Activated CD8-positive, alpha-beta T cell treated with anti-CD3 and anti-CD28 coated beads for 36 hours (primary cell): ENCODE measurements at regions of chr12 and their contacts with region 1.

Region 1: DNA sequence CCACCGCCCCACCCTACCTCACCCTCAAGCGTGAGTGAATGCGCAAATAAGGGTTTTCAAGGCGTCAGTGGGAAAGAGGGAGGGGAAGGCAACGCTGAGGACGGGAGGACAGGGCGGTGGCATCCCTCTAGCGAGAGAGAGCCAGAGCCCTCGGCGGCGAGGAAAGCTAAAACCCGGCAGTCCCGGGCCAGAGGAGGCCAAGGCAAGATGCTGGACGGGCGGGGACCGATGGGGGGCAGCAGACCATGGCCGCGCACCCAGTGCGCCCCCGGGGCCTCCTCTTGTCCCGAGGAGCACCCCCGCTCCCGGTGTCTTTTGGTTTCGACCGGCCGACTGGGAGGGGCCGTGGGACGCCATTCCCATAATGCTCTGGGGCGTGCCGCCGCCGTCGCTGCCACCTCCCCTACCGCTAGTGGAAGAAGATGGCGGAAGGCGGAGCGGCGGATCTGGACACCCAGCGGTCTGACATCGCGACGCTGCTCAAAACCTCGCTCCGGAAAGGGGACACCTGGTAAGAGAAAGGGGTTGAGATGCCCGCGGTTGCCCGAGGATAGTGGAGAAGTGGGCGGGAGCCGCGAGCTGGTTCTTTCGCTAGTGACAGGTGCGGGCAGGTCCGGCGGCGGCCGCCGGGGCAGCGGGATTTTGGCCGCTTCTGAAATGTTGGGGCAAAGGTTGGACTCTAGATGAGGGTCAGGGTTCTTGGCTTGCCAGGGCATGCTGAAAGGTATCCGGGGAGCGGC is at the start of gene USP15:
- DNase-seq: peak; percentile 97
- ATAC-seq: peak; percentile 76
- H3K4me3 Mint-ChIP-seq: peak within 1 kb of the TSS; percentile 83
- H3K27ac Mint-ChIP-seq: peak within 1 kb of the TSS; percentile 96
- H3K4me1 Mint-ChIP-seq: peaks cover 54% of the 10 kb centered on the region
- H3K27me3 Mint-ChIP-seq: no peaks in the 10 kb centered on the region
- CTCF ChIP-seq: peak; percentile 73
- total RNA-seq, gene USP15: 112 to 118 TPM

Region 2: DNA sequence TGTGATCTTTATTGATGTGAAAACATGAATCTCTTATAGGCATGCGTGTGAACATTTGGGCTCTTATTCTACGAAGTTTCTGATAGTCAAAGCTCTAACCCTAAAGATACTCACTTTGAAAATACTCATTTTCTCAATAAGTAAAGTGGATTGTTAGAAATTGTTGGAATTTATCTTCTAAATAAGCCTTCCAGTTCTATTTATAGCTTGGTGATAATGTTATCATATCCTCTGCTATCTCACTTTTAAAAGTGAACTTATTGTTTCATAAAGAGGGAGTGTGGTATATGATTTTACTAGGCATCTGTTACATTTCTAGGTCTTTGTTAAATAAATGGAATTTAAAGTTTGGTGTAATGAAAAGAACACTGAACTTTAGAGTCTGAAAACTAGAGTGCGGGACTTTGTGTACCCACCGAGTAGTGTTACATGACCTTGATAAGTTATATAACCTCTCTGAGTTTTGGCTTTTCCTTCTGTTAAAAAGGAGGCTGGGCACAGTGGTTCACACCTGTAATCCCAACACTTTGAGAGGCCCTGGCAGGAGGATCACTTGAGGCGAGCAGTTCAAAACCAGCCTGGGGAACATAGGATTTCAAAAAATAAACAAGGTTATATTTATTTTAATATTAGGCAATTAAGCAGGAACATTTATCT is 13.7 kb after region 1 on chr12:
- CTCF ChIA-PET with region 1: no interaction called
- POLR2A ChIA-PET with region 1: no interaction called
- intact Hi-C with region 1: loop called (anchors 2 kb)
- DNase-seq: no peak
- ATAC-seq: no peak
- H3K4me3 Mint-ChIP-seq: no peak overlapping the region
- H3K27ac Mint-ChIP-seq: peak overlapping the region; percentile 79
- H3K4me1 Mint-ChIP-seq: peaks cover 75% of the 10 kb centered on the region
- H3K27me3 Mint-ChIP-seq: no peaks in the 10 kb centered on the region
- CTCF ChIP-seq: no peak

Region 3: GRCh38 chr12:62379026-62379722 is 119.0 kb after region 1 on chr12:
- CTCF ChIA-PET with region 1: no interaction called
- POLR2A ChIA-PET with region 1: interaction called, 3 read pairs
- intact Hi-C with region 1: loop called (anchors 10 kb)
- DNase-seq: no peak
- ATAC-seq: no peak
- H3K4me3 Mint-ChIP-seq: no peak overlapping the region
- H3K27ac Mint-ChIP-seq: peak overlapping the region; percentile 42
- H3K4me1 Mint-ChIP-seq: peaks cover 23% of the 10 kb centered on the region
- H3K27me3 Mint-ChIP-seq: no peaks in the 10 kb centered on the region
- CTCF ChIP-seq: no peak

Region 4: GRCh38 chr12:62603061-62603810 is 343.1 kb after region 1 on chr12:
- CTCF ChIA-PET with region 1: no interaction called
- POLR2A ChIA-PET with region 1: interaction called, 3 read pairs
- intact Hi-C with region 1: loop called (anchors 2 kb)
- DNase-seq: peak; percentile 81
- ATAC-seq: peak; percentile 77
- H3K4me3 Mint-ChIP-seq: peak overlapping the region; percentile 95
- H3K27ac Mint-ChIP-seq: peak overlapping the region; percentile 98
- H3K4me1 Mint-ChIP-seq: peaks cover 39% of the 10 kb centered on the region
- H3K27me3 Mint-ChIP-seq: no peaks in the 10 kb centered on the region
- CTCF ChIP-seq: peak; percentile 56